Kidney (tissue), 22 donors: ENCODE measurements at regions of chr2 and their contacts with region 1.

Region 1: GRCh38 chr2:62415019-62415431 is 91.0 kb downstream of the TMEM17 start:
- DNase-seq: no peak
- H3K4me3 ChIP-seq: no peak overlapping the region
- H3K27ac ChIP-seq: no peak overlapping the region
- H3K4me1 ChIP-seq: peaks cover 0 to 13% (median 9%) of the 10 kb centered on the region in 3 donors
- H3K27me3 ChIP-seq: no peaks in the 10 kb centered on the region
- CTCF ChIP-seq: no peak

Region 2: DNA sequence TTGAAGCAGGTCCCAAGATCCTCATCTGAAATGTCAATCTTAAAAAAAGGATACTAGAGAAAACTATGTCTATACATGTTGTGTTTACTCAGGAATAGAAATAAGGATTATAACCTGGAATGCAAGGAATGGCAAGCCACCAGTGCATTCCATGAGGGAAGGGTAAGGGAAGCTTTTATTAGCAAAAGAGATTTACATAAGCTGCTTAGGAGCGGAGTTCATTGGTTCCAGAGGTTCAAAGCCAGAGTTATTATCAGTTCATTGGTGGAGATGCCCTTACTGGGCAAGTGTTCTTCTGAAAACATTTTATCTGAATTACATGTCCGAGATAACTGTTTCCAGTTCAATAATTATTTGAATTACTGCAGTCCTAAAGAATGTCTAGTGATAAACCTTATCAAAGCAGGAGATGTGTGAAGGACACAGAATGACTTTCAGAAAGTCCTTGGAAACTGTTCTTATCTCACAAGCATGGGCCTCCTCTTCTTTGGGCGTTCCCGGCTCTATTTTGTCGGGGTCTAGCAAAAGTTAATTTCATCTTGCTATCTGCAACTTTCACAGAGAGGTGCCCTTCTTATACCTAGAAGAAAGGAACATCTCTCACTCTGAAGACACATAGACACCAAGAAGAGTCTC is 486.1 kb before region 1 on chr2:
- intact Hi-C with region 1: loop called (anchors 10 kb)
- DNase-seq: no peak
- H3K4me3 ChIP-seq: no peak overlapping the region
- H3K27ac ChIP-seq: no peak overlapping the region
- H3K4me1 ChIP-seq: no peaks in the 10 kb centered on the region
- H3K27me3 ChIP-seq: no peaks in the 10 kb centered on the region
- CTCF ChIP-seq: no peak

Region 3: DNA sequence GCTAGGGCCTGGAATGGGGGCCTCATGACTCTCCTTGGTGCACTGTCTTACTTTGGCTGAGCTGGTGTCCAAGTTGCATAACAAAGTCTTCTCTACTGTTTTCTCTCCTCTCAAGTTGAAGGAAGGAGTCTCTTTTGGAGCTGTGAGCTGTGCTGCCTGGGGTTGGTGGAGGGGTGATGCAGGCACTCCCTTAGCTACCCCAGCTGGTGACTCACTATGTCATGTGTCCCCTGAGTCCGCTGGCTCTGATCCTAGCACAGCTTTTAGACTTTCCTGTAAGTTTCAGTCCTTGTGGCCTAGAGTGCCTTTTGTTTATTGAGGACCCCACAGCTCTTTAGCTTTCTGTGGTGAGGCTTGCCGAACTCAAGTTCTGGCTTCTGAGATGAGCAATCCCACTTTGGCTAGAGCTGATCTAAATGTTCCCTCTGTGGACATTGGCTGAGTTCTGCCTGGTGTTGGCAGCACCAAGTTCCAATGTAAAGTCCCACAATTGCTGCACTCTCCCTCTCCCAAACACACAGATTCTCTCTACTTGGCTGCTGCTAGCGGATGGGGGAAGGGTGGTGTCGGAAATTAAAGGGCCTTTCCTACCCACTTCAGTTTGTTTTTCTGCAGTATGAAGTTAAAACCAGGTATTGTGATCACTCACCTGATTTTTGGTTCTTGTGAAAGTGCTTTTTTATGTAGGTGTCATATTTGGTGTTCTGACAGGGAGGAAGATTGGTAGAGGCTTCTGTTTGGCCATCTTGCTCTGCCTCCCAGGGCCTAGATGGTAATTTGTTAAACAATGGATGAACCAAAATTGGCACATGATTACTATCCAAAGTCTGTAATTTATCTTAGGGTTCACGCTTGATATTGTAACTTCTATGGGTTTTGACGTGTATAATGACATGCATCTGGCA is 426.3 kb before region 1 on chr2:
- intact Hi-C with region 1: loop called (anchors 10 kb)
- DNase-seq: no peak
- H3K4me3 ChIP-seq: no peak overlapping the region
- H3K27ac ChIP-seq: no peak overlapping the region
- H3K4me1 ChIP-seq: no peaks in the 10 kb centered on the region
- H3K27me3 ChIP-seq: no peaks in the 10 kb centered on the region
- CTCF ChIP-seq: no peak